ENCODE measurements at regions of chr6 and their contacts with region 1.

Region 1: DNA sequence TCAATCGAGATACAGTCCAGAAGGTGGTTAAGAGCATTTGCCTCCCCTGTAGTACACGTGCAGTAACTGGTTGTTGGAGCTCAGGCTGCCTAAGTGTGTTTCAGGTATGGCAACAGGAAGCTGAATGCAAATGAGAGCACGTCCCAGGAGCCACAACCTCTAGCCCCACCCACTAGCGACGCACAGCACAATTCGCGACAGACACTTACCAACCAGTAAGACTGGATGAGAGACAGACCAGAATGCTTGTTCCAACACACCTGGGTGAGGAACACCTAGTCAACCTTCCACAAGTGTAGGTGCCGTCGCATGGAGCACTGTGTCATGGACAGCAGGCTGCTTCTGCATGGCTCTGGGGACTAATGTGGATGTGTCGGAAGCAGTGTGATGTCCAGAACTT is 7.2 kb upstream of the SERPINB1 start:
- DNase-seq: peak; percentile 85
- ATAC-seq: peak; percentile 66
- H3K4me3 Mint-ChIP-seq: peak overlapping the region; percentile 41
- H3K27ac Mint-ChIP-seq: peak overlapping the region; percentile 82
- H3K4me1 Mint-ChIP-seq: peaks cover 56% of the 10 kb centered on the region
- H3K27me3 Mint-ChIP-seq: no peaks in the 10 kb centered on the region
- CTCF ChIP-seq: no peak

Region 2: DNA sequence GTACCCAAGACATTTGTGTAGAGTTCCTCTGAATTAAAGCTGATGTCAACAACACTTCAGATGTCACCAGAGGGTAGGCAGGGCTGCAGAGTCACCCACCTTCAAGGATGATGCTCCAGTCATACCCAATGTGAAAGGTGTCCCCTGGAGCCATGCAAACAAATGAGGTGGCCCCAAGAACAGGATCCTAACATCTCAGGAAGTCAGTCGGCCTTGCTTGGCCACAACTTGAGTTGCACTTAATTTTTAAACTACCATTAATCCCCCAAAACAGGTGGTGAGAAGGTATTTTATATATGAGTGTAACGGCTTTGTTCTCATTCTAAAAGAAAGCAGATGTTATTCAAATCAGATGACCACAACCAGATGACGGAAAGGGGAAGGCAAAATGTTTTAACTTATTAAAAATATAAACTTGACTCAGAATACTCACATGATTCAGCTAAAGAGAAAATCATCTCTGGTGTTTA is 13.9 kb after region 1 on chr6:
- CTCF ChIA-PET with region 1: interaction called, 37 read pairs
- POLR2A ChIA-PET with region 1: interaction called, 21 read pairs
- intact Hi-C with region 1: no loop called
- DNase-seq: peak; percentile 67
- ATAC-seq: peak; percentile 28
- H3K4me3 Mint-ChIP-seq: no peak overlapping the region
- H3K27ac Mint-ChIP-seq: peak overlapping the region; percentile 88
- H3K4me1 Mint-ChIP-seq: peaks cover 83% of the 10 kb centered on the region
- H3K27me3 Mint-ChIP-seq: no peaks in the 10 kb centered on the region
- CTCF ChIP-seq: no peak

Region 3: DNA sequence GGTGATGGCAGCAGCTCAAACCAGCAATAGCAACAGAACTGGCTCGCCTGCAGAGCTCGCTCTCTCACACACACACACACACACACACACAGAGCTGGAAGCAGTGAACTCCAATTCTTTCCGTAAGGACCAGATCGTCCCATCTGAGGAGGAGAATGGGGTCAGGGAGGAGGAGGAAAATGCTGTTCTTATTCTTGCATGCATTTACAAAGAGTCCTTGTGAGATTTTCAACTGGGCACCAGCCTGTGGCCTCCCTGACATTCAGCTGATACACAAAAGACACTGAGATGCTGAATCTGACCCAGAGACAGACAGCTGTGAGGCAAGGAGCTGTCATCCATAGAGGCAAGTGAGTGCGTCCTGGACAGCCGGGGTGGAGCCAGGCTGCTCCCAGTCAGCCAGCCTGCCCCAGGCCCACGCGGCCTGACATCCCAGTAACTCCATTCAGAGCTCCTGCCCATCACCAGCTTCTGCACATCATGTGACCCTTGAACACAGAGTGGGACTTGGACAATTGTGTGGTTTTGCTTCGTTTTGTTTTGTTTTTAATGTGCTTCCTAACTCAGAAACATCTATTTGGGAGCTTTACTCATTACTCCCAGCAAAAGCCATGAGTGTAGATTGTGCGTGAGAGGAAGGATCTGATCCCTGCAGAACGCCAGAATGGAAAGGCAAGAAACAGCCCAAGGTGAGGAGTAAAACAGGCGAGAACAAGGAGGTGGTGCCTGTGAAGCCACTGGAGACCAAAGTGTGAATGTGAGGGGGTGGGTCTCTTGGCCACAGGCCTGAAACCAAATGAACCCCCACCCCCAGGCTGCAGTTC is 52.2 kb after region 1 on chr6:
- CTCF ChIA-PET with region 1: interaction called, 36 read pairs
- POLR2A ChIA-PET with region 1: interaction called, 13 read pairs
- intact Hi-C with region 1: no loop called
- DNase-seq: peak; percentile 22
- ATAC-seq: peak; percentile 7
- H3K4me3 Mint-ChIP-seq: peak overlapping the region; percentile 98
- H3K27ac Mint-ChIP-seq: peak overlapping the region; percentile 80
- H3K4me1 Mint-ChIP-seq: peaks cover 47% of the 10 kb centered on the region
- H3K27me3 Mint-ChIP-seq: no peaks in the 10 kb centered on the region
- CTCF ChIP-seq: no peak

Region 4: GRCh38 chr6:2931970-2932748 is 83.3 kb after region 1 on chr6:
- CTCF ChIA-PET with region 1: interaction called, 180 read pairs
- POLR2A ChIA-PET with region 1: interaction called, 6 read pairs
- intact Hi-C with region 1: loop called (anchors 5 kb)
- DNase-seq: peak; percentile 94
- ATAC-seq: peak; percentile 90
- H3K4me3 Mint-ChIP-seq: no peak overlapping the region
- H3K27ac Mint-ChIP-seq: peak overlapping the region; percentile 67
- H3K4me1 Mint-ChIP-seq: peaks cover 27% of the 10 kb centered on the region
- H3K27me3 Mint-ChIP-seq: no peaks in the 10 kb centered on the region
- CTCF ChIP-seq: peak; percentile 96

Region 5: DNA sequence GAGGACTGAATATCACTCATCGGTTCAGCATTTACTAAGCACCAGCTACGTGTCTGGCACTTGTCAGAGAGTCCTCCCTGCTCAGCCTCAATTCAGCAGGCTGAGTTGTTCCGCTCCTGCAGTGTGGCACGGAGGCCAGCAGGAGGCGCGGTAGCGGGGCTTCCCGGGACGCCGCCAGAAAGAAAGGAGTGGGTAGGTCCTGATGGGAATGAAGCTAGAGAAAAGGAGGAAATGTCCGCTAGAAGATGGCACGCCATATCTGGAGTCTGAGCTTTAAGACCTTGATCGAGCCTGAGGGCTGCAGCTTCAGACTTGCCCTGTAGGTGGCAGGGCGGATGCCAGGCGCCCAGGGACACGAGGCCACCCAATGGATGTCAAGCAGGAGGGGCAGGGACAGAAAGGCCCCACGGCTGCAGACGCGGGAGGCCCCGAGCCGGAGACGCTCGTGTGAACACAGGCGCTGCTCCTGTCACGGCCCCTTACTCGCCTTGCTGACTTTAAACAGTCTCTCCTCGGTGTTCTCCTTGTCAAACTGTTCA is 103.8 kb after region 1 on chr6:
- CTCF ChIA-PET with region 1: interaction called, 21 read pairs
- POLR2A ChIA-PET with region 1: interaction called, 4 read pairs
- intact Hi-C with region 1: no loop called
- DNase-seq: peak; percentile 77
- ATAC-seq: peak; percentile 97
- H3K4me3 Mint-ChIP-seq: peak overlapping the region; percentile 44
- H3K27ac Mint-ChIP-seq: peak overlapping the region; percentile 68
- H3K4me1 Mint-ChIP-seq: peaks cover 13% of the 10 kb centered on the region
- H3K27me3 Mint-ChIP-seq: no peaks in the 10 kb centered on the region
- CTCF ChIP-seq: peak; percentile 99

Region 6: GRCh38 chr6:2988426-2989331 is 139.8 kb after region 1 on chr6:
- CTCF ChIA-PET with region 1: interaction called, 85 read pairs
- POLR2A ChIA-PET with region 1: interaction called, 33 read pairs
- intact Hi-C with region 1: loop called (anchors 2 kb)
- DNase-seq: peak; percentile 83
- ATAC-seq: peak; percentile 82
- H3K4me3 Mint-ChIP-seq: peak overlapping the region; percentile 95
- H3K27ac Mint-ChIP-seq: peak overlapping the region; percentile 100
- H3K4me1 Mint-ChIP-seq: peaks cover 19% of the 10 kb centered on the region
- H3K27me3 Mint-ChIP-seq: no peaks in the 10 kb centered on the region
- CTCF ChIP-seq: peak; percentile 71